Head of caudate nucleus (tissue), 42 donors: ENCODE measurements at regions of chr17 and their contacts with region 1.

Region 1: DNA sequence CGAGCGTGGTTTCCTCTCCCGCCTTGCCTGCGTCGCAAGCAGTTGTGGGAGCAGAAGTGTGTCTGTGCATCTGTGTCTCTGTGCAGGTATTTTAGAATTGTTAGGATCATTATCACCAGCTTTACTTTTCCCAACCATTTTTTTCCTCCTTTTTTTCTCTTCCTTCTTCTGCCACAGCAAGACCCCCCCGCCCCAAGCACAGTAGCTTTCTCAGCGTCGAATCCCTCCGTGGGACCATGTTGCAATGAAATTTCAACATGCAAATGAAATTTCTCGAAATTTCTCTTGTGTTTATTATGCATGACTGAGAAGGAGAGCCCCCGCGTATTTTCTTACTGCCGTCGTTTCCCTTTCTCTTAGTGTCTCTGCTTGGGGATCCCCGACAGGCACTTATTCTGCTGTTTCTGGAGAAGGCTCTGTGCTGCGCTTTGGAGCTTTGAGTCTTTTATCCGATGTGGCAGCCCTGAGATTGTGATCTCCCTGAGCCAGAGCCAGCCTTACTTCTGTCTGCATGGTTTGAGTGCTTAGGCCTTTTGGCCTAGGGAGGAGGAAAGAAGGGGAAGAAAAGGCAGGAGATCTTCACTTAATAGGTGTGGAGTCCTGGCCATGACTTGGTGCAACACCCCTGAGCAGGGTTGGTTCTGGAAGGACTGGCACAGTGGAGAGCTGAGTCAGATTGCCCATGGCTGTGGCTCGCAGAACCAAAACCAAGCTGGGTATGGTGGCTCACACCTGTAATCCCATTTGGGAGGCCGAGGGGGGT is 5.0 kb downstream of the ARMC7 start:
- DNase-seq: no peak

Region 2: GRCh38 chr17:75131280-75132017 is 16.7 kb after region 1 on chr17 and contains the start of gene NT5C:
- intact Hi-C with region 1: no loop called
- DNase-seq: peak; percentile 52 to 88 (median 74)

Region 3: GRCh38 chr17:75154195-75155106 is 39.7 kb after region 1 on chr17 and contains the start of gene JPT1:
- intact Hi-C with region 1: loop called (anchors 5 kb)
- DNase-seq: peak; percentile 91 to 99 (median 96)